ENCODE measurements at regions of chr16 and their contacts with region 1.

Region 1: DNA sequence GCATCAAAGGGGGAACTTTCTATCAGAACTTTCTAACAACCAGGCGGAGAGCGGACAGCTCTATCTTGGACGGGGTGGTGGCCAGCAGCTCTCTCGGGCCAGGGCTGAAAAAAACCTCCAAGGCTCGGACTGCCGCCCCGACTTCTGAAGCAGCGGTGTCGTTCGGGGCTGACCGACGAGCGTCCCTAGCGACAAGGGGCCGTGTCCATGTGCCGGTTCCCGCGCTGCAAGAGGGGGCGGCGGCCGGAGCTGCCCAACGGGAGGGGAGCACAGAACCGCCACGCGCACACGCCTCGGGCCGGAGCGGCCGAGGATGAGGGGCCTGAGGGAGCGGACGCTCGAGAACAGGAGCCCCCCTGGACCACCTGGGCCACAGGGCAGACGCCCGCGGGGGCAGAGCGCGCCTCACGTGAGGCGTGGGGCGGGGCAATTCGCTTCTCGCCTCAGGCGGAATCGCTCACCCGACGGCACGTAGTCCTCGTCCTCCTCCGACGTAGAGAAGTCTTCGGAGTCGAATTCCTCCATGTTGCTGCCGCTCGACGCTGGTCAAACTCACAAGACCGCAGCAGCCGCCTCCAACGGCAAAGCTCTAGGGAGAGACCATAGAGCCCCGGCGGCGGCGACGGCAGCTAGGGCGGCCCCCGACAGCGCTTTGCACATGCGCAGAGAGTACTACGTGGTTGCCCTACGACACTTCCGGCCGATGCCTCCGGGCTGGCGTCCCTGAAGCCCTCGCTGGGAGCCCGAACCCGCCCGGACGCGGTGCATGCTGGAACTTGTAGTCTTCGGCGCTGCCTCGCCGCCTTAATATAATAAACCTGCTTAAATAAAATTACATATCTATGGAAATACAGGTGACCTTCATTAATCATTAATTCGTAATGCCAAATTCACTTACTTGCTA is at the start of gene CFDP1:
- DNase-seq: peak; percentile 90 to 98 (median 96)
- ATAC-seq: peak; percentile 81
- H3K4me3 ChIP-seq: peak within 1 kb of the TSS; percentile 87 to 90
- H3K4me3 Mint-ChIP-seq: peak within 1 kb of the TSS; percentile 87
- H3K27ac ChIP-seq: peak within 1 kb of the TSS; percentile 95 to 98
- H3K27ac Mint-ChIP-seq: peak within 1 kb of the TSS; percentile 96
- H3K4me1 ChIP-seq: peaks cover 6% of the 10 kb centered on the region
- H3K4me1 Mint-ChIP-seq: peaks cover 38% of the 10 kb centered on the region
- H3K27me3 ChIP-seq: no peaks in the 10 kb centered on the region
- H3K27me3 Mint-ChIP-seq: no peaks in the 10 kb centered on the region
- CTCF ChIP-seq: no peak
- total RNA-seq, gene CFDP1: 18.6 to 20.3 TPM

Region 2: DNA sequence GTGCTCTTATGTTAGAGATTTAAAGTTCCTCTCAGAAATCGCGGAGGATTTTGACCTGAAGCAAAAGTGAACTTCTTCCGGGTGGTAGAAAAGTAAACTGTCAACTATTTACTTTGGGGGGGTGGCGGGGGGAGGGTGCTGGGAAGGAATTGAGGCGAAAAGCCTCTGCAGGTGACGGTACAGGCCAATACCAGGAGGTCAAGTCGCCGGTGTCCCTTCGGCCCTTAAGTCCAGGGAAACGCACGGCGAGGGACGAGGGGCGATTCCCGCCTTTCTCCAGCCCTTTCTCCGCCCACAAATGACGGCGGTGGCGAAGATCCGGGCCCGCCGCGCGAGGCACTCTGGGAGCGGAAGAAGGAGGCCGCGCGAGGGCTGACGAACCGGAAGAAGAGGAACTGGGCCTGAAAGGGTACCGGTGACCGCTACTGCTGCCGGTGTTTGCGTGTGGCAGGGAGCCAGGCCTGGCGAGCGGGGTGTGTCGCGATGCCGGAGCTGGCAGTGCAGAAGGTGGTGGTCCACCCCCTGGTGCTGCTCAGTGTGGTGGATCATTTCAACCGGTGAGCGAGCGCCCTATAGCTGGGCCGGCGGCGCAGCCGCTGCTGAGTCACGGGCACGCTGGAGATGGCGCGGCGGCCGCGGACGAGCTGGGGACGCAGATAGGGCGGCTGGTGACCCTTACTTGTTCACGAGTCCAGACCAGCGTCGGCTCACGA is 1136.5 kb before region 1 on chr16 and contains the start of gene PSMD7:
- CTCF ChIA-PET with region 1: no interaction called
- POLR2A ChIA-PET with region 1: no interaction called
- intact Hi-C with region 1: loop called in 1 of 2 experiments (anchors 10 kb)
- DNase-seq: peak; percentile 77 to 93 (median 89)
- ATAC-seq: peak; percentile 86
- H3K4me3 ChIP-seq: peak within 1 kb of the TSS; percentile 83 to 95
- H3K4me3 Mint-ChIP-seq: peak within 1 kb of the TSS; percentile 95
- H3K27ac ChIP-seq: peak within 1 kb of the TSS; percentile 87 to 97
- H3K27ac Mint-ChIP-seq: peak within 1 kb of the TSS; percentile 99
- H3K4me1 ChIP-seq: peaks cover 25% of the 10 kb centered on the region
- H3K4me1 Mint-ChIP-seq: peaks cover 47% of the 10 kb centered on the region
- H3K27me3 ChIP-seq: no peaks in the 10 kb centered on the region
- H3K27me3 Mint-ChIP-seq: no peaks in the 10 kb centered on the region
- CTCF ChIP-seq: no peak
- total RNA-seq, gene PSMD7: 136 to 137 TPM

Region 3: DNA sequence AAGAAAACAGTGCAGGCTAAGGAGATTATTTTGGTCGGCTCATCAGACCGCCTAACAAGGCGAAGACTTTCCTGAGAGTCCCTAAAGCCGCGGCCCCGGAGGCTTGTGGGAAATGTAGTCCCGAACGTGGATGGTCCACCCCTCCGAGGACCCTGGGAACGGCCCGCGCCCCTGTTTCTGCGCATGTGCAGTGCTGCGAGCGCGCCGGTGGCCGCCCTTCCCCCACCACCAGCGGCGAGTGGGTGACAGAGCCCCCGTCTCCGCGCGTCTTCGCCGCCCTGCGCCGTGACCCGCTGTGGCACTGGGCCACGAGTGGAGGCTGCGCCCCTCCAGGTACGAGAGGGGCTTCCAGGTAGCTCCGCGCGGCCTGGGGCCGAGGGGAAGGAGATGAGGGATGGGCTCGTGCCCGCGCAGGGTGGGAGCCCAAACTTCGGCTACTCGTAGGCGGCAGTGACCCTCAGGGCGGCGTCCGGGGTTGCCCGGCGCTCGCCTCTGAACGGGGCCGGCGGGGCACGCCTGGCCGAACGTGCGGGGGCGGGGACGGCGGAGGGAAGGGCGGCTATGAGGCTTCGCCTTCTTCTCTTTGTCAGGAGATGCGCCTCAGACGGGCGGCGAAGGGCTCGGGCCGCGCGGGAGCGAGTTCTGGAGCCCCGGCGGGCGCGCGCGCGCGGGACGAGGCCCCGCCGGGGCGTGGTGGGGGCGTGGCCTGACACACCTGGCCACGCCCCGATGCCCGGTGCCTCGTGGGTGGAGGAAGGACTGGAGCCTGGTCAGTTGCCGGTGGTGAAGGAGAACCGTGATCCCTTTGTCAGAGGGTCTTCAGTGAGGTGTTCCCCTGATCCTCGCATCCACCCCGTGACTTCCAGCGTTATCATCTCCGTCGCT is 284.5 kb before region 1 on chr16 and contains the start of gene ZFP1:
- CTCF ChIA-PET with region 1: no interaction called
- POLR2A ChIA-PET with region 1: no interaction called
- intact Hi-C with region 1: loop called (anchors 1 kb)
- DNase-seq: peak; percentile 86 to 98 (median 95)
- ATAC-seq: peak; percentile 89
- H3K4me3 ChIP-seq: peak within 1 kb of the TSS; percentile 85 to 100
- H3K4me3 Mint-ChIP-seq: peak within 1 kb of the TSS; percentile 87
- H3K27ac ChIP-seq: peak within 1 kb of the TSS; percentile 84
- H3K27ac Mint-ChIP-seq: peak within 1 kb of the TSS; percentile 88
- H3K4me1 ChIP-seq: peaks cover 12% of the 10 kb centered on the region
- H3K4me1 Mint-ChIP-seq: peaks cover 16% of the 10 kb centered on the region
- H3K27me3 ChIP-seq: no peaks in the 10 kb centered on the region
- H3K27me3 Mint-ChIP-seq: no peaks in the 10 kb centered on the region
- CTCF ChIP-seq: no peak
- total RNA-seq, gene ZFP1: 11.9 to 12.9 TPM

Region 4: DNA sequence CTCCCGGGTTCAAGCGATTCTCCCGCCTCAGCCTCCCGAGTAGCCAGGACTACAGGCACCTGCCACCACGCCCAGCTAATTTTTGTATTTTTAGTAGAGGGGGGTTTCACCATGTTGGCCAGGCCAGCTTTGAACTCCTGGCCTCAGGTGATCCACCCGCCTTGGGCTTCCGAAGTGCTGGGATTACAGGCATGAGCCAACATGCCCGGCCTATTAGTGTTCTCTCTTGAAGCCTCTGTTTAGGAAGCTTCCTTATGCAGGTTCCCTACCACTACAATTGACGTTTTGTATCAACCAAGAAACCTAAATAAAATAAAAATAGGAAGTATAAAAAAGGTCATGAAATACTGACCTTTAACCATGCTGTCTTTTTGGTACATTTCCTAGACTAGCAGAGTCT is 86.8 kb after region 1 on chr16:
- CTCF ChIA-PET with region 1: interaction called, 4 read pairs
- POLR2A ChIA-PET with region 1: interaction called, 8 read pairs
- intact Hi-C with region 1: loop called (anchors 1 kb)
- DNase-seq: no peak
- ATAC-seq: no peak
- H3K4me3 ChIP-seq: no peak overlapping the region
- H3K4me3 Mint-ChIP-seq: no peak overlapping the region
- H3K27ac ChIP-seq: no peak overlapping the region
- H3K27ac Mint-ChIP-seq: no peak overlapping the region
- H3K4me1 ChIP-seq: peaks cover 4% of the 10 kb centered on the region
- H3K4me1 Mint-ChIP-seq: peaks cover 16% of the 10 kb centered on the region
- H3K27me3 ChIP-seq: no peaks in the 10 kb centered on the region
- H3K27me3 Mint-ChIP-seq: no peaks in the 10 kb centered on the region
- CTCF ChIP-seq: no peak

Region 5: DNA sequence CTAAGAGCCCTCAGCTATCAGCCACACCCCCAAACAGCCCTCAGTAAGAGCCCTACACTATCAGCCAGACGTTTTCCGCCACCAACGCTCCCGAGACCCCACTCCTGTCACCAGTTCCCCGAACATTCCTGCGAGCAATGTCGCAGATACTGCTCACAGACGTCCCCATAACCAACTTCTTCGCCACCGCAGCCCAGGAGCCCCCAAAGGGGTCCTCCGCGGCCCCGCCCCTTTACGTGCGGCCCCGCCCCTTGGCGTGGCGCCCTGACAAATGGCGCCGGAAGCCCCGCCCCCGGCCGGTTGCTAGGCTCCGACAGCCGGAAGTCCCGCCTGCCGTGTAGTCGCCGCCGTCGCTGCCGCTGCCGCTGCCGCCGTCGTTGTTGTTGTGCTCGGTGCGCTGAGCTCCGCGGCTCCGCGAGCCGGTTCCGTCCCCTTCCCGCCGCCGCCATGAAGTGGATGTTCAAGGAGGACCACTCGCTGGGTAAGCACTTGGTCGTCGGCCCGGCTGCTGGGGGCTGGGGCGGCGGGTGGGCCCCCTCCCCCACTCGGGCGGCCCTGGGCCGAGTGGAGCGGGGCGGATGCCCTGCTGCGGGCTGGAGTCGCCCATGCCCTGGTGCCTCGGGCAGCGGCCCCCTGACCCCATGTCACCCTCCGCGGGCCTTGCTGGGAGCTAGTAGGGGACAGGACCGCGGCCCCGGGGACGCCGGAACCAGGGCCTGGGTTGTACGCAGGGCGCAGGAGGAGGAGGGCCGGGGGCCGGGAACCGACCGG is 133.1 kb after region 1 on chr16 and contains the start of gene GABARAPL2:
- CTCF ChIA-PET with region 1: interaction called, 3 read pairs
- POLR2A ChIA-PET with region 1: no interaction called
- intact Hi-C with region 1: loop called in 1 of 2 experiments (anchors 1 kb)
- DNase-seq: peak; percentile 84 to 96 (median 91)
- ATAC-seq: peak; percentile 72
- H3K4me3 ChIP-seq: peak within 1 kb of the TSS; percentile 87 to 98
- H3K4me3 Mint-ChIP-seq: peak within 1 kb of the TSS; percentile 94
- H3K27ac ChIP-seq: peak within 1 kb of the TSS; percentile 81 to 90
- H3K27ac Mint-ChIP-seq: peak within 1 kb of the TSS; percentile 97
- H3K4me1 ChIP-seq: peaks cover 12% of the 10 kb centered on the region
- H3K4me1 Mint-ChIP-seq: peaks cover 46% of the 10 kb centered on the region
- H3K27me3 ChIP-seq: peaks cover 0 to 3% of the 10 kb centered on the region in 2 experiments
- H3K27me3 Mint-ChIP-seq: peaks cover 15% of the 10 kb centered on the region
- CTCF ChIP-seq: no peak
- total RNA-seq, gene GABARAPL2: 37.4 to 39.4 TPM

Region 6: DNA sequence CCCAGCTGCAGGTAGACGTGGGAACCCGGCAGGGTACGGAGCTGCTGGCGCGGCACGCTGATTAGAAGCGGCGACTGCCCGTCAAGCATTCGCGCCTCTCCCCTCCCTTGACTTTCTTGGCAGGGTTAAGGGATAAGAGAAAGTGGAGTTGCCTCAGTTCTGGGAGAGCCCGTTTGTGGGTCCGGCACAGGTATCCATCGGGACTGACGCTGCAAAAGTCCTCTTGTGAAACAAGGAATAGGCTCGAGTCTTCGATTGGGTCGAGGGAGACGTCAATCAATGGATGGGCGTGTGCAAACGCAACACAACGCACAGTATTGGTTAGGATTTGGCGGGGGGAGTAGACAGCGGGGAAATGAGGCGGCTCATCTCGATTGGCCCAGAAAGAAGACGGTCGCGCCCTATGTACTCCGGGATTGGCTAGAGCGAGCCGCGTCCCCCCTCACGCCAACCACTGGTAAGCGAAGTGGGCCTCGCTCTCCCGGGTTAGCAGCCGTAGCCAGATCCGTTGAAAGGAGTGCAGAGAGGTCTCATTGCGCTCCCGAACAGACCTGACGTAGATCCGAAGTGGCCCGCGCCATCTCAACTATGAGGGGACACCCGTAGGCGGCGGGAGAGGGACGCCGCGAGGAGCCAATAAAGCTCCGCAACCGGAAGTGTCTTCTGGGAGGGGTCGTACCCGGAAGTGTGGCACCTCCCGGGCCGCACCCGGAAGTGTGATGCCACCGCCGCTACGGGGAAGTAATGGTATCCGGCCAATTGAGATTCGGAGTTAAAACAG is 1757.6 kb after region 1 on chr16 and contains the start of gene MON1B:
- CTCF ChIA-PET with region 1: no interaction called
- POLR2A ChIA-PET with region 1: no interaction called
- intact Hi-C with region 1: loop called in 1 of 2 experiments (anchors 1 kb)
- DNase-seq: peak; percentile 88 to 99 (median 95)
- ATAC-seq: peak; percentile 93
- H3K4me3 ChIP-seq: peak within 1 kb of the TSS; percentile 70 to 81
- H3K4me3 Mint-ChIP-seq: peak within 1 kb of the TSS; percentile 100
- H3K27ac ChIP-seq: peak within 1 kb of the TSS; percentile 98
- H3K27ac Mint-ChIP-seq: peak within 1 kb of the TSS; percentile 100
- H3K4me1 ChIP-seq: peaks cover 26% of the 10 kb centered on the region
- H3K4me1 Mint-ChIP-seq: peaks cover 52% of the 10 kb centered on the region
- H3K27me3 ChIP-seq: no peaks in the 10 kb centered on the region
- H3K27me3 Mint-ChIP-seq: peaks cover 6% of the 10 kb centered on the region
- CTCF ChIP-seq: no peak
- total RNA-seq, gene MON1B: 49.1 to 50.7 TPM

Measured in CD8-positive, alpha-beta T cell (primary cell).